ENCODE measurements at regions of chr17 and their contacts with region 1.

Region 1: GRCh38 chr17:65181237-65182061 is 44.3 kb downstream of the RGS9 start:
- DNase-seq: peak in 2 of 5 donors; percentile 21 to 22
- H3K4me3 ChIP-seq: no peak overlapping the region
- H3K4me3 Mint-ChIP-seq: peak overlapping the region; percentile 10 to 86 (median 58)
- H3K27ac ChIP-seq: peak overlapping the region; percentile 2
- H3K27ac Mint-ChIP-seq: peak overlapping the region; percentile 63 to 98 (median 90)
- H3K4me1 ChIP-seq: peaks cover 54% of the 10 kb centered on the region
- H3K4me1 Mint-ChIP-seq: peaks cover 51 to 76% (median 66%) of the 10 kb centered on the region in 4 donors
- H3K27me3 ChIP-seq: no peaks in the 10 kb centered on the region
- H3K27me3 Mint-ChIP-seq: no peaks in the 10 kb centered on the region

Region 2: GRCh38 chr17:65122836-65123756 is 58.4 kb before region 1 on chr17:
- CTCF ChIA-PET with region 1: interaction called, 3 read pairs
- POLR2A ChIA-PET with region 1: interaction called, 27 read pairs
- intact Hi-C with region 1: no loop called
- DNase-seq: peak; percentile 86 to 90 (median 88)
- H3K4me3 ChIP-seq: peak overlapping the region; percentile 4 to 57
- H3K4me3 Mint-ChIP-seq: peak overlapping the region; percentile 87 to 96 (median 92)
- H3K27ac ChIP-seq: peak overlapping the region; percentile 53
- H3K27ac Mint-ChIP-seq: peak overlapping the region; percentile 80 to 99 (median 99)
- H3K4me1 ChIP-seq: peaks cover 20% of the 10 kb centered on the region
- H3K4me1 Mint-ChIP-seq: peaks cover 11 to 27% (median 20%) of the 10 kb centered on the region in 4 donors
- H3K27me3 ChIP-seq: no peaks in the 10 kb centered on the region
- H3K27me3 Mint-ChIP-seq: peaks cover 0 to 5% of the 10 kb centered on the region in 2 donors

Region 3: GRCh38 chr17:65198653-65199382 is 17.4 kb after region 1 on chr17:
- CTCF ChIA-PET with region 1: interaction called, 10 read pairs
- POLR2A ChIA-PET with region 1: interaction called, 4 read pairs
- intact Hi-C with region 1: no loop called
- DNase-seq: peak in 4 of 5 donors; percentile 65 to 68 (median 68)
- H3K4me3 ChIP-seq: no peak overlapping the region
- H3K4me3 Mint-ChIP-seq: no peak overlapping the region
- H3K27ac ChIP-seq: no peak overlapping the region
- H3K27ac Mint-ChIP-seq: peak overlapping the region in 2 of 7 donors; percentile 3 to 15
- H3K4me1 ChIP-seq: peaks cover 6% of the 10 kb centered on the region
- H3K4me1 Mint-ChIP-seq: peaks cover 0 to 6% (median 4%) of the 10 kb centered on the region in 4 donors
- H3K27me3 ChIP-seq: no peaks in the 10 kb centered on the region
- H3K27me3 Mint-ChIP-seq: no peaks in the 10 kb centered on the region

Region 4: GRCh38 chr17:65332375-65332774 is 150.9 kb after region 1 on chr17:
- CTCF ChIA-PET with region 1: no interaction called
- POLR2A ChIA-PET with region 1: no interaction called
- intact Hi-C with region 1: no loop called
- DNase-seq: no peak
- H3K4me3 ChIP-seq: no peak overlapping the region
- H3K4me3 Mint-ChIP-seq: no peak overlapping the region
- H3K27ac ChIP-seq: no peak overlapping the region
- H3K27ac Mint-ChIP-seq: no peak overlapping the region
- H3K4me1 ChIP-seq: no peaks in the 10 kb centered on the region
- H3K4me1 Mint-ChIP-seq: no peaks in the 10 kb centered on the region
- H3K27me3 ChIP-seq: no peaks in the 10 kb centered on the region
- H3K27me3 Mint-ChIP-seq: peaks cover 12 to 15% of the 10 kb centered on the region in 2 donors

Measured in CD4-positive, alpha-beta memory T cell (primary cell).